Gastrocnemius medialis (tissue), 4 donors: ENCODE measurements at regions of chr10 and their contacts with region 1.

Region 1: DNA sequence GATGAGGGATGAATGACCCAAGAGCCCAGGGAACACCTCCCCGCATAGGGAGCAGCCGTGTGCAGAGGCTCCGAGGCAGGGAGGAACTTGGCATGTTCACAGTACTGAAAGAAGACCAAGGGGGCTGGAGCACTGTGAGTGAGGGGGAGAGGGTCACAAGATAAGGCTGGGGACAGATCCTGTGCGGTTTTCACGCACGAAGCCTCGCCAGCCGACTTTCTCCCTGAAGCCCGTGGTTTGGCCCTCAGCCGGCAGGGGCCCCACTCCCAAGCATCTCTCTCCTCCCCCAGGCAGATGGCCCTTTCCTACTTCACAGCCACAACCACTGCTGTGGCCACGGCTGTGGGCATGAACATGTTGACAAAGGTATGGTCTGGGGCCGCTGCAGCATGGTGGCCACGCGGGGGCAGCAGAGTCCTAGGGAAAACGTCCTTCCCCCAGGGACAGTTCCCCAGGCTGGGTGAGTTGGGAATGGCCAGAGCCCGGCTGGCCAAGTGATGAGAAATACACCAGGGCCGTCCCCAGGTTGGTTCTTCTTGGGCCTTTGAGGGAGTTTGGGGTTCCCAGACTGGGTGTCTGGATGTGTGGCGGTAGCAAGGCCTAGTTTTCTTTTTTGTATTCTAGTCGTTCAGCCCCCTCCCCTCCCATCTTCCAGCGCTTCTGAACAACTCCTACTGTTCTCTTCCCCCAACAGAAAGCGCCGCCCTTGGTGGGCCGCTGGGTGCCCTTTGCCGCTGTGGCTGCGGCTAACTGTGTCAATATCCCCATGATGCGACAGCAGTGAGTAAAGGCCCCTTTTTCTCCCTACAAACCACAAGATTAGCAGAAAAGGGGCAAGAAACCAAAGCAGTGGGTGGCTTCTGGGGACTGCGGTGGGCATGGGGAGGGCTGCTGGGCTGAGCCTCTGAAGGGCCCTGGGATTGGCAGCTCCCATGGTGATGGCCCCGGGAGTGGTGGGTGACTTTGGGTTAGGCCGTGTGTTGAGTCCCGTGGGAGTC is 14.4 kb upstream of the WBP1L start:
- DNase-seq: peak; percentile 66 to 85
- ATAC-seq: peak; percentile 91 to 96
- H3K4me3 ChIP-seq: no peak overlapping the region
- H3K27ac ChIP-seq: no peak overlapping the region
- H3K4me1 ChIP-seq: peaks cover 0 to 4% of the 10 kb centered on the region in 2 donors
- H3K27me3 ChIP-seq: no peaks in the 10 kb centered on the region
- CTCF ChIP-seq: peak; percentile 93 to 96 (median 95)
- POLR2A ChIP-seq: no peak

Region 2: DNA sequence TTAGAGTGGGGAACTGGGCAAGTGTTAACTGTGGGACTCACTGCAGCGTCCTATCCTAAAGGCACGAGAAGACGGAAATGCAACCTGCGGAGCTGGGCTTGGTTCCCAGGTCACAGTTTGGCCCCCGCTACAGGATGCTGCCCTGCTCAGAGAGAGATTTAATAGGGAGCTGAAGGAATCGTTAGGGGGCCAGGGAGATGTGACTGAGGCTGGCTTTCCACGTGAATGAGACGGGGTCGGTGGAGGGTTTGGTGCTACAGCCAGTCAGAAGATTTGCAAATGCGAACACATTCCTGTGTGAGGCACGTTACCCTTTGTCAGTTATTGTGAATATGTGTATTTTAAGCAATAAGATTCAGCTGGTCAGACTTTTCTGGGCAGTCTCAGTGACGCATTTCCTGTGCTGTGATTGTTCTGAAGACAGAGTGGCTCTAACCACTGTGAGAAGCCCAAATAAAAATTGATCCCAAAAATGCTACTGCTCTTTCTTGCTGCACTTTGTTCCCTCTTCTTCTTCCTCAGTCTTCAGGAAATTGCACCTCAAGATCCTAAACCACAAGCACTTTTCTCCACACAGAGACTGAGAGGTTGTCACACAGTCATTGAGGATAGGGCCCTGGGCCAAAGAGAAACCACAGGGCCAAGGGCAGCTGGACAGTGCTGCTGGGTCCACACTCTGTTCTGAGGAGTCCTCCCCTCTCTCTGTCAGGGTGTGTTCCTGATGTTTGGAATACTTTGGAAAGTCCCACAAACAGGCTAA is 86.6 kb after region 1 on chr10:
- in situ Hi-C with region 1: no loop called
- intact Hi-C with region 1: no loop called
- DNase-seq: peak; percentile 51 to 57
- ATAC-seq: peak; percentile 43 to 61
- H3K4me3 ChIP-seq: no peak overlapping the region
- H3K27ac ChIP-seq: peak overlapping the region; percentile 84 to 89 (median 86)
- H3K4me1 ChIP-seq: peaks cover 40 to 46% of the 10 kb centered on the region in 2 donors
- H3K27me3 ChIP-seq: no peaks in the 10 kb centered on the region
- CTCF ChIP-seq: no peak
- POLR2A ChIP-seq: peak; percentile 33 to 60

Region 3: GRCh38 chr10:102835007-102835482 is 105.7 kb after region 1 on chr10:
- in situ Hi-C with region 1: loop called in 2 of 4 experiments (anchors 5 to 10 kb)
- intact Hi-C with region 1: loop called (anchors 1 kb)
- DNase-seq: peak; percentile 55 to 69
- ATAC-seq: peak; percentile 88 to 90
- H3K4me3 ChIP-seq: no peak overlapping the region
- H3K27ac ChIP-seq: no peak overlapping the region
- H3K4me1 ChIP-seq: peaks cover 4 to 5% of the 10 kb centered on the region in 2 donors
- H3K27me3 ChIP-seq: no peaks in the 10 kb centered on the region
- CTCF ChIP-seq: peak; percentile 72 to 90 (median 82)
- POLR2A ChIP-seq: no peak

Region 4: DNA sequence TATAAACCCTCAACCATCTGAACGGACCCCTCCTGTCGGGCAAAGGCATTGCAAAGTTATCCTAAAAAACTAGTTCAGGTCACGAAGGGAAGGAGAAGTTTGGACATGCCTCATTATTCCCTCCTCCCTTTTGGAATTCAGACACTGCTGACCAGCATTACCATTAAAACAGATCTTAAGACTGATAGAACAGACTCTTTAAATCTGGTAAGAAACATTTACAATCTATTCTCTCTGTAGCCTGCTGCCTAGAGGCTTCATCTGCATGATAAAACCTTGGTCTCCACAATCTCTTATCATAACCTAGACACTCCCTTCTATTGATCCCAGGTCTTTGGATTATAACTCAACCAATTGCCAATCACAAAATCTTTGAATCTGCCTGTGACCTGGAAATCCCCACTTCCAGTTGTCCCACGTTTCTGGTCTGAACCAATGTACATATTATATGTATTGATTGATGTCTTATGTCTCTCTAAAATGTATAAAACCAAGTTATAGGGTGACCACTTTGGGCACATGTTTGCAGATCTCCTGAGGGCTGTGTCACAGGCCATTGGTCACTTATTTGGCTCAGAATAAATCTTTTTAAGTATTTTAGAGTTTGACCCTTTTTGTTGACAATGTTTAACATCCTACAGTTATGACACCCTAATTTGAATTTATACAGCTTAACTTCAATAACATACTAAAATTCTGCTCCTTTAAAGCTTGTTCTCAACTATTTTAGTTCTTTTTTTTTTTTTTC is 165.3 kb after region 1 on chr10:
- in situ Hi-C with region 1: loop called in 1 of 4 experiments (anchors 10 kb)
- intact Hi-C with region 1: no loop called
- DNase-seq: no peak
- ATAC-seq: no peak
- H3K4me3 ChIP-seq: no peak overlapping the region
- H3K27ac ChIP-seq: no peak overlapping the region
- H3K4me1 ChIP-seq: no peaks in the 10 kb centered on the region
- H3K27me3 ChIP-seq: no peaks in the 10 kb centered on the region
- CTCF ChIP-seq: no peak
- POLR2A ChIP-seq: no peak

Region 5: DNA sequence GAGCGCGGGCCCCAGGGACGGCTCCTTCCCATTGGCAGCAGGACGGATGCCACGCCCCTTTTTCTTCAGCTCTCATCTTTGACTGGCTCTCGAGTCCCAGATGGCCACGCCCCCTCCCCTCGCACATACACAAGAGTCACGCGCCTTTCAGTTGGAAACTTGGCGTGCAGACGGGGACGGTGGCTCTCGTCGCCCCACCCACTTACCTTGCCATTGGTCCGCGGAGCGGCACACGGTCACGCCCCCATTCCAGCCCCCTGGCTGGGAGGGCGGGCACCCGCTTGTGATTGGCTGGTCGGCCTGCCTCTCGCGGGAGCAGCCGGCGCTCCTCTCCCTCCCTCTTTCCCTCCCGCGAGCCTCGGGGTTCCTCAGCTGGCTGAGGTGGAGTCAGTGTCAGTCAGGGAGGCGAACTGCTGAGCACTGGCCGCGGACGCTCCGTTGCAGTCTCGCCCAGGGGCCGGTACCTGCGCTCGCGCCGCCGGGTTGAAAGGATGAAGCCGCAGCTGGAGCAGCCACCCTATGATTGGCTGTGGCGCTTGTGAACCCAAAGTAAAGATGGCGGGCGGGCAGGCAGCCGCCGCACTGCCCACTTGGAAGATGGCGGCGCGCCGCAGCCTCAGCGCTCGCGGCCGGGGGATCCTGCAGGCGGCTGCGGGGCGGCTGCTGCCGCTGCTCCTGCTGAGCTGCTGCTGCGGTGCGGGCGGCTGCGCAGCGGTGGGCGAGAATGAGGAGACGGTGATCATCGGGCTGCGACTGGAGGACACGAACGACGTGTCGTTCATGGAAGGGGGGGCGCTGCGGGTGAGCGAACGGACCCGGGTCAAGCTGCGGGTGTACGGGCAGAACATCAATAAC is 188.9 kb after region 1 on chr10 and contains the start of gene CNNM2:
- in situ Hi-C with region 1: no loop called
- intact Hi-C with region 1: loop called (anchors 1 kb)
- DNase-seq: peak; percentile 100
- ATAC-seq: peak; percentile 88 to 90
- H3K4me3 ChIP-seq: peak within 1 kb of the TSS; percentile 80 to 95 (median 92)
- H3K27ac ChIP-seq: peak within 1 kb of the TSS; percentile 96 to 98 (median 96)
- H3K4me1 ChIP-seq: peaks cover 30 to 32% of the 10 kb centered on the region in 2 donors
- H3K27me3 ChIP-seq: no peaks in the 10 kb centered on the region
- CTCF ChIP-seq: no peak
- POLR2A ChIP-seq: peak; percentile 57 to 65
- total RNA-seq, gene CNNM2: 1.1 to 3.2 (median 2.0) TPM

Region 6: DNA sequence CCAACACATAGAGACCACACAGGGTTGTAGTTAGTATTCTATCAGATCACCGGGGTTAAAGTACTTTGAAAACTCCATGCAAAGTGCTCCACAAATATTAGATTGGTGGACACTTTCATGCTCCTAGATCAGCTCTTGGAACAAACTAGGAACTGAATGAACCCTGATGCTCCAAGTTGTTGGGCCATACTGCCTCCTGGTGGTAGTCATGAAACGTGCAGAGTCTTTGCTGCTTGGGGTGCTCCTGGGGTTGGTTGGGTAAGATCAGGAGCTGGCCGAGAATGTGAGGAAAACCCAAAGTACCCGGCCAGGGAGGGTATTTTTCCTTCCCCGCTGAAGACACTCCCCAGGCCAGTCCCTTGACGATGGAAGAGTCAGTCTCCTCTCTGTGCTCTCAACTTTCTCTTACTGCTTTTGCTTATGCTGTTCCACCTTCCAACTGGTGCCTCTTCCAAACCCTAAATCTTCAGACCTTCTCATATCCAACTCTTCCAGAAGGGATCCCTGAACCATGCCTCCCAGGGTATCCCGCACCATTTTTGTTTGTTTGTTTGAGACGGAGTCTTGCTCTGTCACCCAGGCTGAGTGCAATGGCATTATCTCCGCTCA is 515.4 kb after region 1 on chr10:
- in situ Hi-C with region 1: loop called (anchors 10 to 25 kb)
- intact Hi-C with region 1: loop called (anchors 5 kb)
- DNase-seq: peak; percentile 50 to 79
- ATAC-seq: peak; percentile 69 to 82
- H3K4me3 ChIP-seq: no peak overlapping the region
- H3K27ac ChIP-seq: no peak overlapping the region
- H3K4me1 ChIP-seq: peaks cover 19% of the 10 kb centered on the region in 2 donors
- H3K27me3 ChIP-seq: no peaks in the 10 kb centered on the region
- CTCF ChIP-seq: peak; percentile 90 to 91 (median 91)
- POLR2A ChIP-seq: no peak